Aorta (tissue), 5 donors: ENCODE measurements at regions of chr7 and their contacts with region 1.

Region 1: GRCh38 chr7:123865517-123866117 is 20.6 kb downstream of the HYAL4 start:
- DNase-seq: no peak
- ATAC-seq: peak; percentile 88
- H3K4me3 ChIP-seq: no peak overlapping the region
- H3K27ac ChIP-seq: no peak overlapping the region
- H3K4me1 ChIP-seq: peaks cover 0 to 5% of the 10 kb centered on the region in 2 donors
- H3K27me3 ChIP-seq: no peaks in the 10 kb centered on the region

Region 2: GRCh38 chr7:123570401-123571182 is 295.0 kb before region 1 on chr7:
- intact Hi-C with region 1: loop called in 1 of 2 experiments (anchors 10 kb)
- DNase-seq: no peak
- ATAC-seq: no peak
- H3K4me3 ChIP-seq: no peak overlapping the region
- H3K27ac ChIP-seq: no peak overlapping the region
- H3K4me1 ChIP-seq: no peaks in the 10 kb centered on the region
- H3K27me3 ChIP-seq: no peaks in the 10 kb centered on the region

Region 3: DNA sequence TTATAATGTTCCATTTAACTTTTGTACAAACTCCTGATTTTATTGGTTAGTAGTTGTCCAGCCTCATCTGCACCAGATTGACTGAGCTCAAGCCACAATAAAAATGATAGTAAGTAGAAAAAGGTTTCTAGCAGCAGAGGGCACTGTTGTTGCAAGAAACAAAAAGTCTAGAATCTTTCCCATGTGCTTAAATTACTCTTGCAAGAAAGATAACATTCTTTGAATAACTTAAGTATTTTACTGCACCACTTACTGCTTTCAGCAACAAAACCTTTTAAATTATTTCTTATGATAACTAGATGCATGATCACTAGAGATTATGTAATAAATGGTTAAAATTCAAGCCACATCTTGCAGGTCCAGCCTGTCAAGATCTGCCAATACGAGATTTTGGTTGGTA is 182.9 kb before region 1 on chr7:
- intact Hi-C with region 1: loop called (anchors 2 to 5 kb)
- DNase-seq: no peak
- ATAC-seq: no peak
- H3K4me3 ChIP-seq: no peak overlapping the region
- H3K27ac ChIP-seq: no peak overlapping the region
- H3K4me1 ChIP-seq: no peaks in the 10 kb centered on the region
- H3K27me3 ChIP-seq: no peaks in the 10 kb centered on the region

Region 4: DNA sequence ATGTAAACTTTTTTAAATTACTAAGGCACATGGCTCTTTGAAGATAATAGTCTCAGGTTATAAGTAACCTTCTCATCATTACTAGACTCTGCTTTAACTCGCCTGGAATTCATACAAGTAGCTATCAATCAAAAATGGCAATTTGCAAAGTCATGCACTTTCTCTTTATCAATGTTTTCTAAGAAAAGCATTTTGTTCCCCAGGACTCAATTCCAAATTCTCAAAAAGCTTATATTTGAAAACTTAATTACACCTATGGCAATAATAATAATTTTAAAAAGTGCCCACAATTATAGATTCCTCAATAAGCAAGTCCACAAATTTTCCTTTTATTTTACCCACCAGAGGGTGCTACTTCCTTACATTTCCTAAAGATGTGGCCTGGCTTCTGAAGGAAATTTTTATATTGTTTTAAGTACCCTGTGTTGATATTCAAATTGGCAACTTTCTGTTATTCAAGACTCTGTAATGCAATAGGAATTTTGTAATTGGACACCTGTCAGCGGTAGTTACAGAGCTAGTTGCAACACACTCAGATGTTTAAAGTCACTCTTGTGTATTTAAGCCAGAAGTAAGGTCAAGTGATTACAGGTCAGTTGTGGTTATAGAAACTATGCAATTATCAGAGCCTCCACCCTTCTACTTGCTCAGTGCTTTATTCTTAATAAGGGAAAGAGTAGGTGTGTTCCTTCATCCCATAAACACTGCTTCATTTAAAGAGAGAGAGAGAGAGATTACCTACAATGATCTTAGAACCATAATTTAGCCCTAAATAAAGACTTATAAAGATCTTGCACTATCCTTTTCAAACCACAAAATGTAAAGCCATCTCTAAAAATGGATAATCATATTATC is 67.7 kb before region 1 on chr7:
- intact Hi-C with region 1: loop called (anchors 1 to 5 kb)
- DNase-seq: no peak
- ATAC-seq: no peak
- H3K4me3 ChIP-seq: no peak overlapping the region
- H3K27ac ChIP-seq: no peak overlapping the region
- H3K4me1 ChIP-seq: peaks cover 0 to 3% of the 10 kb centered on the region in 2 donors
- H3K27me3 ChIP-seq: no peaks in the 10 kb centered on the region